Head of caudate nucleus (tissue), 42 donors: ENCODE measurements at regions of chr10 and their contacts with region 1.

Region 1: GRCh38 chr10:61903221-61903927 is 1.9 kb downstream of the ARID5B start:
- DNase-seq: peak; percentile 20 to 77 (median 64)

Region 2: GRCh38 chr10:61567729-61568128 is 335.6 kb before region 1 on chr10:
- intact Hi-C with region 1: no loop called
- DNase-seq: no peak

Region 3: GRCh38 chr10:62048919-62049623 is 145.7 kb after region 1 on chr10:
- intact Hi-C with region 1: loop called (anchors 5 kb)
- DNase-seq: peak; percentile 74 to 95 (median 88)